H1 (cell line): ENCODE measurements at regions of chr1 and their contacts with region 1.

Region 1: DNA sequence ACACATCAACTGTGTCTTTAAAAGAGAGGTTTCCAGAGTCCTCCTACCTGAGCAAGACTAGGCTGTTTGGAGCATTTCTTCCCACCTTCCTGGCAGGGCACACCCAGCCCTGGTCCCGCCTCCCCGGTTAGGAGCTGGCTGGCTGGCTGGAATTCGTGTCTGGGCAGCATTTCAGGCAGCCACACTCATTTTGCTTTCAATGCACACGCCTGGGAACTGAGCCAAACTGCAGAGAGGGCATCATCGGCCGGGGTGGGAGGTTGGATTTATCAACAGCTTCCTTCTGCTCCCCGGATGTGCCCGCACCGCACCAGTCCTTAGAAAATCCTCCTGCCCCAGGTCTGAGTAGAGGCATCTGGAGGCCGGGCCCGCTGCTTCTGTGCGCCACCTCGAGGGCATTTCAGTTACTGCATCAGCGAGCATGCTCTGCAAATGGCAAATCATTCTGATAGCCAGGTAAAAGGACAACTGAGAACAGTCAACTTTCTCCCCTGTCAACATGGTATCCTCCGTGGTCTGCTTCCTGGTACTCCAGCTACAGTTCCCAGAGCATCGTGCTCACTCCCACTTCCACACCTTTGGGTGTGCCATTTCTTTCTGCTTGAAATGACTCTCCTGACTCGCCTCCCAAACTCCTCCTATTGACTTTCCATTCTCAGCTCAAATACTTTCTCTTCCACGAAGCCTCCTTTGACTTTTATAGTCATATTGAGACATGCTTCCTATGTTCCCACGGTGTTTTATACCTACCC is 20.6 kb downstream of the TCEA3 start:
- DNase-seq: peak; percentile 51 to 98
- H3K4me3 ChIP-seq: peak overlapping the region in 3 of 4 experiments; percentile 16 to 49 (median 29); a peak in 4 of 8 replicates
- H3K27ac ChIP-seq: no peak overlapping the region
- H3K4me1 ChIP-seq: peaks cover 0 to 4% (median 2%) of the 10 kb centered on the region in 4 experiments; a peak in 2 of 7 replicates
- H3K27me3 ChIP-seq: peaks cover 15 to 95% (median 61%) of the 10 kb centered on the region in 4 experiments
- CTCF ChIP-seq: peak; percentile 86 to 98 (median 90)
- EP300 ChIP-seq: 0 out of 3 replicates have a peak, but pooled peaks of 1 of the 2 experiments have one; percentile 13
- POLR2A ChIP-seq: no peak
- RAD21 ChIP-seq: peak; percentile 87

Region 2: GRCh38 chr1:23357138-23357908 is 46.6 kb before region 1 on chr1:
- CTCF ChIA-PET with region 1: interaction called, 12 read pairs
- POLR2A ChIA-PET with region 1: no interaction called
- DNase-seq: peak in 1 of 2 experiments; percentile 54
- H3K4me3 ChIP-seq: no peak overlapping the region
- H3K27ac ChIP-seq: no peak overlapping the region
- H3K4me1 ChIP-seq: no peaks in the 10 kb centered on the region
- H3K27me3 ChIP-seq: peaks cover 79 to 99% (median 93%) of the 10 kb centered on the region in 4 experiments
- CTCF ChIP-seq: no peak
- EP300 ChIP-seq: peak in 1 of 2 experiments; percentile 89; a peak in 1 of 3 replicates
- POLR2A ChIP-seq: no peak
- RAD21 ChIP-seq: 0 out of 4 replicates have a peak, but pooled peaks of 1 of the 2 experiments have one; percentile 0

Region 3: GRCh38 chr1:23367791-23368561 is 35.9 kb before region 1 on chr1:
- CTCF ChIA-PET with region 1: interaction called, 11 read pairs
- POLR2A ChIA-PET with region 1: no interaction called
- DNase-seq: peak; percentile 94 to 96
- H3K4me3 ChIP-seq: peak overlapping the region; percentile 74 to 95 (median 83)
- H3K27ac ChIP-seq: no peak overlapping the region
- H3K4me1 ChIP-seq: peaks cover 2 to 11% (median 4%) of the 10 kb centered on the region in 4 experiments; a peak in 6 of 7 replicates
- H3K27me3 ChIP-seq: peaks cover 44 to 80% (median 67%) of the 10 kb centered on the region in 4 experiments
- CTCF ChIP-seq: no peak
- EP300 ChIP-seq: no peak
- POLR2A ChIP-seq: no peak
- RAD21 ChIP-seq: no peak

Region 4: GRCh38 chr1:23384302-23385058 is 19.4 kb before region 1 on chr1:
- CTCF ChIA-PET with region 1: interaction called, 44 read pairs
- POLR2A ChIA-PET with region 1: interaction called, 4 read pairs
- DNase-seq: no peak
- H3K4me3 ChIP-seq: no peak overlapping the region
- H3K27ac ChIP-seq: no peak overlapping the region
- H3K4me1 ChIP-seq: no peaks in the 10 kb centered on the region
- H3K27me3 ChIP-seq: peaks cover 16 to 76% (median 55%) of the 10 kb centered on the region in 4 experiments
- CTCF ChIP-seq: no peak
- EP300 ChIP-seq: no peak
- POLR2A ChIP-seq: no peak
- RAD21 ChIP-seq: no peak

Region 5: DNA sequence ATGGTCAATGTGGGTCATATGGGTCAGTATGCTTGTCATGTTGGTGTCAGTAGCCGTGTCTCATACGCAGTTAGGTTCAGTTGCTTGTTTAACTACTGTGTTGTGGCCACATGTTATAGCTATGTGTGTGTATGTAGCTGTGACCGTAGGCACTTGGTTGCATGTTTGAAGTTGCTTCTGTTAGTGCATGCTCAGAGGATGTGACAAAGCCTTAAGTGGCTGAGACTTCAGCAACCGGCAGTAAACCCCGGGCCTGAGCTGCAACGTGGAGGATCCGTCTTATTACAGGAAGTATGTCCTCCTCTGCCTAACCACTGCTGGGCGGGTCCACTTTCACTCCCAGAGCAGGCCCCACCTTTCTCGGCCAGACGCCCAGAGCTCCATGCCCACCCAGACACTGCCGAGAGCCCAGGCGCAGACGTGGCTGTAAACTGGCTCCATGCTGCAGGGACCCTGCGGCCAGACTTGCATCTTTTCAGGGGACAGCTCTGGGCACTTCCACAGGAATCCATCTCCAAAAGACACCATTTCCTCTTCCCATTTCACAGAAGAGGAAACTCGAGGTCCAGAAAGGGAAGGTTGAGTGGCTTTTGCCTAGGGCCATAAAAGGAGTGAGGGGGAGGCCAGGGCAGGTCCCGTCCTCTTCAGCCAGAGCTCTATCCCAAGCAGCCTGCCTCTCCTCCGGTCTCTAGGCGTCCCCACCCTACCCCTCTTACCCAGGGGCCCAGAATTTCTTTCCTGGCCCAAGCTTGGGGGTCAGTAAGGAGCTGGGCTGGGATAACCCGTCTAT is 18.5 kb after region 1 on chr1:
- CTCF ChIA-PET with region 1: interaction called, 29 read pairs
- POLR2A ChIA-PET with region 1: interaction called, 5 read pairs
- DNase-seq: no peak
- H3K4me3 ChIP-seq: no peak overlapping the region
- H3K27ac ChIP-seq: no peak overlapping the region
- H3K4me1 ChIP-seq: peaks cover 1 to 11% (median 3%) of the 10 kb centered on the region in 4 experiments; a peak in 6 of 7 replicates
- H3K27me3 ChIP-seq: peaks cover 78 to 95% (median 93%) of the 10 kb centered on the region in 4 experiments
- CTCF ChIP-seq: no peak
- EP300 ChIP-seq: no peak
- POLR2A ChIP-seq: no peak
- RAD21 ChIP-seq: no peak

Region 6: DNA sequence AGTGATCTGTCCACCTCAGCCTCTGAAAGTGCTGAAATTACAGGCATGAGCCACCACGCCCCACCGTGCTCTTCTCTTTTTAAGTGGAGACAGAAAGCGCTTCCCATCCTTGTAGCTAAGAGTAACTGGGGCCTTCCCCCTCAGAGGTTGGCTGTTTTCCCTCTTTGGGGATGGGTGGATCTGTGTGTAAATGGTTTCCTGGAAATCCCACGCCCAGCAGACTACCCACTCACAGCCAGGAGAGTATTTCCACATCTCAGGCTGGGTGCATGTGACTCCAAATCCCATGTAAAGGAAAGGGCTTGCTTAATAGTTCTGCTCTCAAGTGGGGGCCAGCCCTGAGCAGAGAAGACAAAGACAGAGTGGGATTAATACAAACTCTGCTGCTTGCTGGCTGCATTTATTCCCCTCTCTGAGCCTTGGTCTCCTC is 40.2 kb after region 1 on chr1:
- CTCF ChIA-PET with region 1: interaction called, 10 read pairs
- POLR2A ChIA-PET with region 1: no interaction called
- DNase-seq: no peak
- H3K4me3 ChIP-seq: no peak overlapping the region
- H3K27ac ChIP-seq: no peak overlapping the region
- H3K4me1 ChIP-seq: no peaks in the 10 kb centered on the region
- H3K27me3 ChIP-seq: no peaks in the 10 kb centered on the region
- CTCF ChIP-seq: no peak
- EP300 ChIP-seq: no peak
- POLR2A ChIP-seq: no peak
- RAD21 ChIP-seq: no peak